ENCODE measurements at regions of chr2 and their contacts with region 1.

Region 1: DNA sequence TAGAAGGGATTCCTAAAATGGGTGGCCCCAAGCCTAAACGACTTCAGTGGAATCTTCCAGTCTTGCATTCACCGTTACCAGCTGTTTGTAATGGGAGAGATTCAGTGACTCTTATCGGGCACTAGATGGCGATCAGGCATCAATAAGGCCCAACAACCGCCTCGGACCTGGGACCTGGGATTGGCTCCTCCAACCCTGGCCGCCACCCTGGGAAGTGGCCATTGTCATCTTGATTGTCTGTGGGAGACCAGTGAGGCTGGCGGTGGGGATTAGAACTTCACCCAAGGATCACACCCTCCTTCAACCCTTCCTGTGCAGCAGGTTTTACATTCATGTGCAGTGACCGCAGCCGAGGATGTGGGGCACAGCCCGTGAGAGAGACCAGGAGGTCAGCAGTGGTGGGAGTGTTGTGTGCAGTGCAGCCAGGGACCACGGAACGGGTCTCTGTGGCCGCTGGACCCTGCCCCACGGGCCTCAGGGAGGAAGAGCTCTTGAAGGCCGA is 85.3 kb downstream of the SPP2 start:
- DNase-seq: peak; percentile 66
- H3K4me3 Mint-ChIP-seq: no peak overlapping the region
- H3K27ac Mint-ChIP-seq: peak overlapping the region; percentile 34
- H3K4me1 Mint-ChIP-seq: peaks cover 27% of the 10 kb centered on the region
- H3K27me3 Mint-ChIP-seq: peaks cover 20% of the 10 kb centered on the region

Region 2: GRCh38 chr2:233974530-233975071 is 161.2 kb before region 1 on chr2:
- CTCF ChIA-PET with region 1: interaction called, 11 read pairs
- DNase-seq: no peak
- H3K4me3 Mint-ChIP-seq: no peak overlapping the region
- H3K27ac Mint-ChIP-seq: peak overlapping the region; percentile 24
- H3K4me1 Mint-ChIP-seq: peaks cover 24% of the 10 kb centered on the region
- H3K27me3 Mint-ChIP-seq: peaks cover 20% of the 10 kb centered on the region

Region 3: GRCh38 chr2:234060236-234060635 is 75.5 kb before region 1 on chr2:
- CTCF ChIA-PET with region 1: no interaction called
- DNase-seq: no peak
- H3K4me3 Mint-ChIP-seq: no peak overlapping the region
- H3K27ac Mint-ChIP-seq: no peak overlapping the region
- H3K4me1 Mint-ChIP-seq: no peaks in the 10 kb centered on the region
- H3K27me3 Mint-ChIP-seq: peaks cover 37% of the 10 kb centered on the region

Region 4: GRCh38 chr2:234191819-234192407 is 56.1 kb after region 1 on chr2:
- CTCF ChIA-PET with region 1: no interaction called
- DNase-seq: no peak
- H3K4me3 Mint-ChIP-seq: no peak overlapping the region
- H3K27ac Mint-ChIP-seq: no peak overlapping the region
- H3K4me1 Mint-ChIP-seq: no peaks in the 10 kb centered on the region
- H3K27me3 Mint-ChIP-seq: peaks cover 14% of the 10 kb centered on the region

Region 5: GRCh38 chr2:234278556-234279255 is 142.9 kb after region 1 on chr2:
- CTCF ChIA-PET with region 1: interaction called, 13 read pairs
- DNase-seq: peak; percentile 46
- H3K4me3 Mint-ChIP-seq: no peak overlapping the region
- H3K27ac Mint-ChIP-seq: peak overlapping the region; percentile 91
- H3K4me1 Mint-ChIP-seq: peaks cover 72% of the 10 kb centered on the region
- H3K27me3 Mint-ChIP-seq: no peaks in the 10 kb centered on the region

Region 6: DNA sequence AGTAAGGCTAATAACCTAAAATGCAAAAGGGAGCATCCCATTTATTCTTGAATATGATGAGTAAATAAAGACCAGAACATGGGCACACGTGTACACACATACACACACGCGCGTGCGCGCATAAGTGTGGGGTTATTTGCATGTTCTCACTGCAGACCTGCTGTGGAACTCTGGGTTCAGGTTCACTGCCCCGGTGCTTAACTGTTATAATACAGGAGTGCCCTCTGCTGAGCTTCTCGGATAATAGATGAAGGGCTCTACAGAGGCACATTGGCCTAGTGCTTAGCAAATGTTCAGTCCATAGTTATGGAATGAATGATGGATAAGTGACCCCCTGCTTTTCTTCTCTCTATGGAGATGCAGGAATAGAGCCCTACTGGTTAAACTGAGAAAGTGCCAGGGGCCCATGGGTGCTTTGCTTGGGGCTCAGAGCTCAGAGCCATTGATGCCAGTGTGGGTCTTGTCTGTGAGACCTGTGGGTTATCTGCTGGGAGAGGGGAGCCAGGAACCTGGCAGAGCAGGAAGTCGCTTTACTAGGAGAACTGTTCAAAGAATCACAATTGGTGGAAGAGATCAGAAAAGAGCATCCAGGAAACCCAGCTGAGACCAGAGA is 364.7 kb after region 1 on chr2:
- CTCF ChIA-PET with region 1: interaction called, 66 read pairs
- DNase-seq: peak; percentile 86
- H3K4me3 Mint-ChIP-seq: peak overlapping the region; percentile 47
- H3K27ac Mint-ChIP-seq: peak overlapping the region; percentile 89
- H3K4me1 Mint-ChIP-seq: peaks cover 33% of the 10 kb centered on the region
- H3K27me3 Mint-ChIP-seq: peaks cover 24% of the 10 kb centered on the region

Region 7: DNA sequence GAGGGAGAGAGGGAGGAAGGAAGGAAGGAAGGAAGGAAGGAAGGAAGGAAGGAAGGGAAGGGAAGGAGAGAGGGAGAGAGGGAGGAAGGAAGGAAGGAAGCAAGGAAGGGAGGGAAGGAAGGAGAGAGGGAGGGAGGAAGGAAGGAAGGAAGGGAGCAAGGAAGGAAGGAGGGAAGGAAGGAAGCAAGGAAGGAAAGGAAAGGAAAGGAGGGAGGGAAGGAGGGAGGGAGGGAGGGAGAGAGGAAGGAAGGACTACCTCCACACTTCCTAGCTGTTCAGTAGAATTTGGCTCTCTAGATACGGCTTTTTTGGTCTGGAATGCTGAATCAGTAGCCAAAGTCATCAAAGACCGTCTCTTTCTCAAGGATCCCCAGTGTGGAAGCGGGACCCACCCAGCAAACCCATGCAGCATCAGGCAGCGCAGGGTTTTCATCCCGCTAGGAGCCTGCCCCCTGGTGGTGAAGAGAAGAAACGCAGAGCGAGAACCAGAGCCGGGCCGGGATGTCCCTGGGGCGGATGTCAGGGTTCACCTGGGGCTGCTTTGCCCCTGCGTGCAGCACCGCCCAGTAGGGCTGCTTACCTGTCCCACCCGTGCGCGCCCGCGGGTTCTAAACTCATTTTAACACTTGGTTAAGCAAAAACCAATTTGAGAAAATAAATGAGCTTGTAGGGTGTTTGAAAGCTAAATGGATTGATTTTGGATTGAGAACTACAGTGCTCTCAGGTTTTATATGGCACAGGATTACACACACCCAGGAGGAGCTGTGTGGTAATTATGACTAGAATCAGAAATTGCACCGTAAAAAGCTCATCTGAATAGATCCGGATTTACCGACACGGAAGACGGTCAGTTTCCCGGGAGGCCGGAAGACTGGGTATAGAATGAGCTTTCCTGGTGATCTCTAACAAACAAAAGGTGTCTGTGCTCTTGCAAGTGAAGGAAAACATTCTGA is 409.2 kb after region 1 on chr2:
- CTCF ChIA-PET with region 1: interaction called, 60 read pairs
- DNase-seq: peak; percentile 85
- H3K4me3 Mint-ChIP-seq: no peak overlapping the region
- H3K27ac Mint-ChIP-seq: no peak overlapping the region
- H3K4me1 Mint-ChIP-seq: peaks cover 11% of the 10 kb centered on the region
- H3K27me3 Mint-ChIP-seq: peaks cover 39% of the 10 kb centered on the region

Measured in activated naive CD4-positive, alpha-beta T cell treated with anti-CD3 and anti-CD28 coated beads, Interleukin-2, amount 10 ng/mL, durations not matched to agents 7 days and 5 days (primary cell).